ENCODE measurements at regions of chr13 and their contacts with region 1.

Region 1: GRCh38 chr13:48184260-48184659 is 48.7 kb upstream of the ITM2B start:
- DNase-seq: no peak
- ATAC-seq: no peak
- H3K4me3 ChIP-seq: no peak overlapping the region
- H3K4me3 Mint-ChIP-seq: peak overlapping the region in 2 of 3 donors; percentile 22 to 52
- H3K27ac ChIP-seq: peak overlapping the region; percentile 4
- H3K27ac Mint-ChIP-seq: peak overlapping the region; percentile 91 to 94
- H3K4me1 ChIP-seq: peaks cover 41 to 48% of the 10 kb centered on the region in 2 experiments
- H3K4me1 Mint-ChIP-seq: peaks cover 64 to 71% (median 69%) of the 10 kb centered on the region in 3 donors
- H3K27me3 ChIP-seq: no peaks in the 10 kb centered on the region
- H3K27me3 Mint-ChIP-seq: no peaks in the 10 kb centered on the region

Region 2: DNA sequence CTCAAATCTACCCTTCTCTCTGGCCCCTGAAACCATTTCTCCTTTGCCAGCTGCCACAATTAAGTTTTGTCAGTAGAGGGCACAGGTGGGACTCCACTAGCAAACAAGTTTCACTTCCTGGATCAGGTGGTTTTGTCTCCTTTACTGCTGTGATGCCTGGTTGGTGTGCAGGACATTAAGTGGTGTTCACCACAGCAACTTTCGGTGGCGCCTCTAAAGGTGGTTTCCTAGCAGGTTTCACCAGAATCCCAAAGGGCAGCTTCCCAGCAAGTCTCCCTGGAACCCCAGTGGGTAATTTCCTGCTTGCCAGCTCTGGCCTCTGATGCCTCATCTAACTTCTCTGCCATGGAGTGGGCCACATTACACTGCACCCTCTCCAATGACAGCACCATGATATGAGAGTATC is 106.0 kb before region 1 on chr13:
- CTCF ChIA-PET with region 1: no interaction called
- POLR2A ChIA-PET with region 1: no interaction called
- DNase-seq: peak in 6 of 35 experiments; percentile 1 to 42 (median 5)
- ATAC-seq: peak; percentile 52 to 67 (median 54)
- H3K4me3 ChIP-seq: no peak overlapping the region
- H3K4me3 Mint-ChIP-seq: no peak overlapping the region
- H3K27ac ChIP-seq: no peak overlapping the region
- H3K27ac Mint-ChIP-seq: peak overlapping the region in 1 of 2 donors; percentile 44
- H3K4me1 ChIP-seq: peaks cover 0 to 2% of the 10 kb centered on the region in 2 experiments
- H3K4me1 Mint-ChIP-seq: peaks cover 0 to 2% (median 0%) of the 10 kb centered on the region in 3 donors
- H3K27me3 ChIP-seq: no peaks in the 10 kb centered on the region
- H3K27me3 Mint-ChIP-seq: no peaks in the 10 kb centered on the region

Region 3: DNA sequence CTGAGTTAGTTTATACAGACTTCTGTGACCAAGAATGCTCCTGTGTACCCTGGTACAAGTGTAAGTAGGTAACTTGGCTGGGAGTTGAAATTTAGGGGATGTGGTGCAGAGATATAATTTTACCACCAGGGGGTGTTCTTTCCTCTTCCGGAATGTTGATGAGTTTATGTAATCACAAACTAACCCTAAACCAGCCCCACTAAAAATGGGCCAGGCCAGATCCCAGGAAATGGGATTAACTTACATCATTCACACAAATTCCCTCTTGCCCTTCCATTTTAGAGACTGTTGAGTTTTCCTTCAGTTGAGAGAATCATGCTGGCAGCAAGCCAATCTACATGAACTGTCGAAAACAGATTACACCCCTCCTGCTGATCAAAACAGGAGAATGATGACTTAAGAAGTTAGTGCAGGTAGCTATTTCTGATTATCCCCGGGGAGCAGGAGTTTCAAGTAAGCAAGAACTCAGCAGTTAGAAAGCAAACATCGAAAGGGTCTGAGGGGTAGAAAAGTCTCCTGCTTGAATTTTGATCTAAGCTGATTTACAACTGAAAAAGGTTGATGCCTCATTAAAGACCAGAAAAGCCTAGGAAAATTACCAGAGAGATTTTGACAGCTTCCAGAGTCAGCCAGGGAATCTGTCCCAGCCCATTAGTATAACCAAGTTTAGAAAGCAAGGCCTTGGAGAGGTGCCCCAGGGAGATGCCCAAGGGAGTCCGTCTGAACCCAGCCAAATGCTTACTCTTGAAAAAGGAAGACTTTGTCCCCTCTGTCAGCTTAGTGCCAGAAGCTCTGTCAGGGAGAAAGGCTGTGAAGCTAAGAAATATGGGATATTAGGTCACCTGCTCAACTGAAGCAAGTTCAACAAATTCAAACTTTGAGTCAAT is 57.1 kb before region 1 on chr13:
- CTCF ChIA-PET with region 1: interaction called in 1 of 2 experiments, 10 read pairs
- POLR2A ChIA-PET with region 1: interaction called in 1 of 2 experiments, 4 read pairs
- DNase-seq: peak in 34 of 35 experiments; percentile 2 to 82 (median 31)
- ATAC-seq: peak; percentile 81 to 94 (median 92)
- H3K4me3 ChIP-seq: no peak overlapping the region
- H3K4me3 Mint-ChIP-seq: peak overlapping the region; percentile 25 to 39 (median 35)
- H3K27ac ChIP-seq: peak overlapping the region; percentile 68
- H3K27ac Mint-ChIP-seq: peak overlapping the region; percentile 87 to 91
- H3K4me1 ChIP-seq: peaks cover 8 to 13% of the 10 kb centered on the region in 2 experiments
- H3K4me1 Mint-ChIP-seq: peaks cover 23 to 32% (median 32%) of the 10 kb centered on the region in 3 donors
- H3K27me3 ChIP-seq: no peaks in the 10 kb centered on the region
- H3K27me3 Mint-ChIP-seq: peaks cover 0 to under 1% of the 10 kb centered on the region in 2 donors

Region 4: DNA sequence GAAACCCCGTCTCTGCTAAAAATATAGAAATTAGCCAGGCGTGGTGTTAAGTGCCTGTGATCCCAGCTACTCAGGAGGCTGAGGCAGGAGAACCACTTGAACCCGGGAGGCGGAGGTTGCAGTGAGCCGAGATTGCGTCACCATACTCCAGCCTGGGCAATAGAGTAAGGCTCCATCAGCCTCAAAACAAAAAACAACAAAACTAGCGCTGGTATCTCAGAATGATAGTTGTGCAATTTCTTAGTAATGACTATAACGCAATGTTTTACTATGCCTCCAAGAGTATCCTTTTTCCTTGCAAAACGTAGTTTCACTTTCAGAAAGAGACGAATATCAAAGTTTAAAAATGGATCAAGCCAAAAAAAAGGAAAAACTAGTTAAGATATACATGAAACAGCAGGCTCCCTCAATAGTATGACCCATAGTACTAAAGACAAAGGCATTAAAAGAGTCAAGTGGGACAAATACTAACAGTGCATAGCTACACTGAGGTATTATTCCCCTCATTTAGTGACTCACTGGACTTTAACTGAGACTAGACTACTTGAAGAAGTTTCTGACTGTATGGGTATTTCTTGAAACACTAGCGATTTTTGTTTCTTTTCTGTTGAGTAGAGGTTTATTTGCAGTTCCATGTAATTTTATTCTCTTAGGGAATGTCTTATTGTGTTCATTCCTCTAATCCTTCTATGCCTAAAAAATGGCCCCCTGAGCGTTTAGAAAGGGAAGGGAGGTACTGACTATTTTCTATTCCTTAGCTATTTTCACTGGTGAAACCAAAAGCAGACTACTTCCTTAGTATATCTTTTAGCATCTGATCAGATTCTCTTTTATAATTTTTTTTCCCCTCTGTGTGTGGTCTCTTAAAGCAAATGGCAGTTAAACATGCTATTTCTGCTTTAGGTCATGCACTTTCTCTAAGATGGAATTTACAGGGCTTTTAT is 38.4 kb after region 1 on chr13:
- CTCF ChIA-PET with region 1: interaction called, 3 to 6 read pairs
- POLR2A ChIA-PET with region 1: interaction called in 1 of 2 experiments, 12 read pairs
- DNase-seq: no peak
- ATAC-seq: peak in 1 of 4 experiments; percentile 54
- H3K4me3 ChIP-seq: no peak overlapping the region
- H3K4me3 Mint-ChIP-seq: peak overlapping the region; percentile 53 to 69 (median 66)
- H3K27ac ChIP-seq: peak overlapping the region; percentile 86
- H3K27ac Mint-ChIP-seq: peak overlapping the region; percentile 98 to 99
- H3K4me1 ChIP-seq: peaks cover 35 to 45% of the 10 kb centered on the region in 2 experiments
- H3K4me1 Mint-ChIP-seq: peaks cover 64 to 78% (median 65%) of the 10 kb centered on the region in 3 donors
- H3K27me3 ChIP-seq: no peaks in the 10 kb centered on the region
- H3K27me3 Mint-ChIP-seq: no peaks in the 10 kb centered on the region

Region 5: DNA sequence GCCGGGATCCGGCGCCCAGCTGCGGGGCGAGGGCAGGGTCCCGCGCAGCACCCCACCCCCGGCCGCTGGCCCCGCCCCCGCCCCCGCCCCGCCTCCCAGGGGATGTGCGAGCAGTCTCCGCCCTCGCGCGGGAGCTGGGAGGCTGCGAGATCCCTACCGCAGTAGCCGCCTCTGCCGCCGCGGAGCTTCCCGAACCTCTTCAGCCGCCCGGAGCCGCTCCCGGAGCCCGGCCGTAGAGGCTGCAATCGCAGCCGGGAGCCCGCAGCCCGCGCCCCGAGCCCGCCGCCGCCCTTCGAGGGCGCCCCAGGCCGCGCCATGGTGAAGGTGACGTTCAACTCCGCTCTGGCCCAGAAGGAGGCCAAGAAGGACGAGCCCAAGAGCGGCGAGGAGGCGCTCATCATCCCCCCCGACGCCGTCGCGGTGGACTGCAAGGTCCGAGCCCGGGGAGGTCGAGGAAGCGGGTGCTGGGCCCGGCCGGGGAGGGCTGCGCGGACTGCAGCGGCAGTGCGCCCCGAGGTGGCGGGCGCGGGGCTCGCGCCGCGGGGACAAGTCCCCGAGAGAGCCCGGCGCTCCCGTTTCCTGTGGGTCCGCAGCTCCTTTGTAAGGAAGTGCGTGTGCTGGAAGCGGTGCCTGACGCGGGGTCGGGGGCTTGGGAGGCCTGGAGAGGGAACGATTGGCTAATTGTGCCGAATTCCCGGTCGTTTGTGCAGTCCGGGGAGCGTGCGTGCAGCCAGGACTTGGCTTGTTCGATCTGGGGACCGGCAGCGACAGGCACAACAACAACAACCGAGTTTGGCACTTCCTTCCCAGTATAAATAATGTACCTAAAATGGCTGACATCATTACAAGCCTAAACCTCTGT is 49.0 kb after region 1 on chr13 and contains the start of gene ITM2B:
- CTCF ChIA-PET with region 1: interaction called, 3 to 9 read pairs
- POLR2A ChIA-PET with region 1: interaction called, 3 to 15 read pairs
- DNase-seq: peak; percentile 34 to 81 (median 56)
- ATAC-seq: peak; percentile 83 to 88 (median 84)
- H3K4me3 ChIP-seq: peak within 1 kb of the TSS; percentile 82 to 100
- H3K4me3 Mint-ChIP-seq: peak within 1 kb of the TSS; percentile 88 to 96 (median 95)
- H3K27ac ChIP-seq: peak within 1 kb of the TSS; percentile 85
- H3K27ac Mint-ChIP-seq: peak within 1 kb of the TSS; percentile 98
- H3K4me1 ChIP-seq: peaks cover 21 to 30% of the 10 kb centered on the region in 2 experiments
- H3K4me1 Mint-ChIP-seq: peaks cover 49 to 59% (median 55%) of the 10 kb centered on the region in 3 donors
- H3K27me3 ChIP-seq: no peaks in the 10 kb centered on the region
- H3K27me3 Mint-ChIP-seq: no peaks in the 10 kb centered on the region
- total RNA-seq, gene ITM2B: 347 to 539 (median 452) TPM

Region 6: GRCh38 chr13:48542581-48543341 is 358.5 kb after region 1 on chr13:
- CTCF ChIA-PET with region 1: no interaction called
- POLR2A ChIA-PET with region 1: no interaction called
- DNase-seq: no peak
- ATAC-seq: no peak
- H3K4me3 ChIP-seq: no peak overlapping the region
- H3K4me3 Mint-ChIP-seq: no peak overlapping the region
- H3K27ac ChIP-seq: no peak overlapping the region
- H3K27ac Mint-ChIP-seq: no peak overlapping the region
- H3K4me1 ChIP-seq: peaks cover 0 to 4% of the 10 kb centered on the region in 2 experiments
- H3K4me1 Mint-ChIP-seq: peaks cover 0 to 2% (median 0%) of the 10 kb centered on the region in 3 donors
- H3K27me3 ChIP-seq: no peaks in the 10 kb centered on the region
- H3K27me3 Mint-ChIP-seq: no peaks in the 10 kb centered on the region